ENCODE measurements at regions of chr2 and their contacts with region 1.

Region 1: GRCh38 chr2:116180072-116180471 is 1634.4 kb upstream of the DDX18 start:
- DNase-seq: no peak
- H3K4me3 ChIP-seq: no peak overlapping the region
- H3K27ac ChIP-seq: no peak overlapping the region
- H3K4me1 ChIP-seq: no peaks in the 10 kb centered on the region
- H3K27me3 ChIP-seq: no peaks in the 10 kb centered on the region
- CTCF ChIP-seq: no peak

Region 2: DNA sequence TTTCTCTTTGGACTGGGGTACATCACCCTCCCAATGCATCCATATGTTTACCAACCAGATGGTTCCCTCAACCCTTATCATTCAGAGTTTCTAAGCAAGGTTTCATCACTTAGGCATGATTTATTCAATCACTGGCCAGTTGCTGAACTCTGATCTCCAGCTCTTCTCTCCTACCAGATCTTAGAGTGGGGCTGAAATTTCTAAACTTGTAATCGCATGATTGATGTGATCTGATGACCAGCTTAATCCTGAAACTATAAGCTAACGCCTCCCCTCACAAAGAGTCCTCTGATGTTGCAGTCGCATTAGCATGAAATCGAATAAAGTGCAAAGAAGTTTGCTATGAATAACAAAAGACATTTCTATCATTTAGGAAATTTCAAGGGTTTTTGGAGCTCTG is 655.6 kb before region 1 on chr2:
- CTCF ChIA-PET with region 1: no interaction called
- POLR2A ChIA-PET with region 1: interaction called, 31 read pairs
- intact Hi-C with region 1: no loop called
- DNase-seq: no peak
- H3K4me3 ChIP-seq: no peak overlapping the region
- H3K27ac ChIP-seq: no peak overlapping the region
- H3K4me1 ChIP-seq: no peaks in the 10 kb centered on the region
- H3K27me3 ChIP-seq: peaks cover 4% of the 10 kb centered on the region; the same call in 1 of the 2 replicates
- CTCF ChIP-seq: no peak